Psoas muscle (tissue), 8 donors: ENCODE measurements at regions of chr1 and their contacts with region 1.

Region 1: GRCh38 chr1:79104617-79105016 is 98.1 kb upstream of the ADGRL4 start:
- DNase-seq: no peak
- ATAC-seq: no peak
- H3K4me3 ChIP-seq: no peak overlapping the region
- H3K27ac ChIP-seq: no peak overlapping the region
- H3K4me1 ChIP-seq: no peaks in the 10 kb centered on the region
- H3K27me3 ChIP-seq: no peaks in the 10 kb centered on the region
- CTCF ChIP-seq: no peak

Region 2: DNA sequence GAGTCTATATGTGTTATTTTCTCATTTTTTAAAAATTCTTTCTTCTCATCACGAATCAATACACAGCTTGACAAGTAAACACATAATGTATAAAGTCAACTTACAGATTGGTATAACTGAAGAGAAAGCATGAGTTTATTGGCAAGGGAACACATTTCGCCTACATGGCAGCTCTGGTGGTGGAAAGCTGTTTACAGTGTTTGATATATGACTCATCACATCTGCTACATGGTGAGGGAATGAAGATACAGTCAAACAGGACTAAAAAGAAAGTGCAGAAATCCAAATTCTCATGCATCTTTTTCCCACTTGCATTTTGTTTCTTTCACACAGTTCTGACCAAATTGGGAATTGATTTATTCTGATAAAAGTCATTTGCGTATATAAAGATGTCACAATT is 24.1 kb after region 1 on chr1:
- intact Hi-C with region 1: loop called in 1 of 2 experiments (anchors 1 kb)
- DNase-seq: no peak
- ATAC-seq: no peak
- H3K4me3 ChIP-seq: no peak overlapping the region
- H3K27ac ChIP-seq: no peak overlapping the region
- H3K4me1 ChIP-seq: no peaks in the 10 kb centered on the region
- H3K27me3 ChIP-seq: no peaks in the 10 kb centered on the region
- CTCF ChIP-seq: no peak